Sigmoid colon (tissue), 7 donors: ENCODE measurements at regions of chr15 and their contacts with region 1.

Region 1: DNA sequence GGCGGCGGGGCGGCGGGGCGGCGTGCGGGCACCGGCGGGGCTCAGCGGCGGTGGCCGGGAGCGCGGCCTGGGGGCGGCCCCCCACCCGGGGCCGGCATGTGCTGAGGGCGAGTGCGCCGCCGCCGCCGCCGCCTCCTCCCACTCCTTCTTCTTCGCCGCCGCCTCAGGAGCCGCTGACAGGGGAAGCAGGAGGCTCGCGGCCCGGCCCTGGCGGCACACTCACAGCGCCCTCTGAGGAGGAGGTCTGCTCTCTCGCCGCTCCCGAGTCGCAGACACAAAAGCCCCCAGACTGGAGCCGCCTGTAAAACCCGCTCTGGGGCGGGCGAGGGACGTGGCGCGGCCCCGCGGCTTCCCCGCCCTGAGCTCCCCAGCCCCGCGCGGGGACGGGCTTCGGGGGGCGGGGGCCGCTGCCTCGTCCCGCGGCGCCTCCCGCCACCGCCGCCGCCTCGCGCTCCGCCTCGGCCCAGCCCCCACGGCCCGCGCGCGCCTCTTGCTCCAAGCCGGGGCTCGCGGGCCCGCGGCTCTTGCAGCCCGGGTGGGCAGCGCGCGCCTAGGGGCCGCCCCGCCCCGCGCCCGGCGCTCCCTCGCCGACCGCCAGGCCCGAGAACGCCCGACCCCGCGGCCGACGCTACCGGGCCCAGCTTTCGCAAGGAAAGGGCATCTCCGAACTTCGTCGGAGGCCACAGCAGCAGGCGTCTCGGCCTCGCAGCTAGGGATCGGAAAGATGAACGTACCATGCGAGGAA is at the start of gene PYGO1:
- DNase-seq: peak; percentile 81
- H3K4me3 ChIP-seq: peak within 1 kb of the TSS; percentile 59 to 82 (median 64)
- H3K27ac ChIP-seq: peak within 1 kb of the TSS; percentile 91 to 95 (median 94)
- H3K4me1 ChIP-seq: peaks cover 0 to 27% (median 19%) of the 10 kb centered on the region in 4 donors
- H3K27me3 ChIP-seq: no peaks in the 10 kb centered on the region
- CTCF ChIP-seq: no peak
- EP300 ChIP-seq: no peak
- POLR2A ChIP-seq: no peak
- total RNA-seq, gene PYGO1: 14.5 to 20.7 (median 18.6) TPM

Region 2: DNA sequence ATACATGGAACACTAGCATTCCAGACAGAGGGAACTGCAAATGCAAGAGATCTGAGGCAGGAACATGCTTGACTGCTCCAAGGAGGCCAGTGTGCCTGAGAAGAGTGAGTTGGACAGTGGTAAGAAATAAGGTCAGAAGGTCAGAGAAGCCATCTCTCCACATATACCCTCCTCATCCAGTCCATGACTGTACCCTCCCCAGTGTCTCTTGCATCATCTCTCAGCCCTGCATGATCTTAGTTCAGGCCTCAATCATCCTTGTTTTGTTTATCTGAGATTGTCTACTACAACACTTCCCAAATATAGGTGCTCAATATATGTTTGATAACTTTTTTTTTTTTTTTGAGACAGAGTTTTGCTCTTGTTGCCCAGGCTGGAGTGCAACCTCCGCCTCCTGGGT is 386.0 kb before region 1 on chr15:
- intact Hi-C with region 1: loop called (anchors 5 kb)
- DNase-seq: no peak
- H3K4me3 ChIP-seq: no peak overlapping the region
- H3K27ac ChIP-seq: no peak overlapping the region
- H3K4me1 ChIP-seq: peaks cover 0 to 8% (median 3%) of the 10 kb centered on the region in 4 donors
- H3K27me3 ChIP-seq: no peaks in the 10 kb centered on the region
- CTCF ChIP-seq: no peak
- EP300 ChIP-seq: no peak
- POLR2A ChIP-seq: no peak

Region 3: GRCh38 chr15:55494931-55495330 is 93.3 kb before region 1 on chr15:
- intact Hi-C with region 1: loop called (anchors 2 kb)
- DNase-seq: no peak
- H3K4me3 ChIP-seq: no peak overlapping the region
- H3K27ac ChIP-seq: no peak overlapping the region
- H3K4me1 ChIP-seq: peaks cover 0 to 8% (median 4%) of the 10 kb centered on the region in 4 donors
- H3K27me3 ChIP-seq: no peaks in the 10 kb centered on the region
- CTCF ChIP-seq: no peak
- EP300 ChIP-seq: no peak
- POLR2A ChIP-seq: no peak